ENCODE measurements at regions of chr2 and their contacts with region 1.

Region 1: GRCh38 chr2:105143467-105144151 is 97.9 kb upstream of the GPR45 start:
- DNase-seq: peak; percentile 55
- ATAC-seq: peak; percentile 88
- H3K4me3 Mint-ChIP-seq: peak overlapping the region; percentile 88
- H3K27ac Mint-ChIP-seq: peak overlapping the region; percentile 71
- H3K4me1 Mint-ChIP-seq: peaks cover 26% of the 10 kb centered on the region
- H3K27me3 Mint-ChIP-seq: no peaks in the 10 kb centered on the region
- CTCF ChIP-seq: no peak

Region 2: GRCh38 chr2:105114551-105114950 is 29.1 kb before region 1 on chr2:
- CTCF ChIA-PET with region 1: interaction called, 12 read pairs
- POLR2A ChIA-PET with region 1: no interaction called
- intact Hi-C with region 1: no loop called
- DNase-seq: no peak
- ATAC-seq: no peak
- H3K4me3 Mint-ChIP-seq: no peak overlapping the region
- H3K27ac Mint-ChIP-seq: no peak overlapping the region
- H3K4me1 Mint-ChIP-seq: no peaks in the 10 kb centered on the region
- H3K27me3 Mint-ChIP-seq: no peaks in the 10 kb centered on the region
- CTCF ChIP-seq: peak; percentile 64

Region 3: DNA sequence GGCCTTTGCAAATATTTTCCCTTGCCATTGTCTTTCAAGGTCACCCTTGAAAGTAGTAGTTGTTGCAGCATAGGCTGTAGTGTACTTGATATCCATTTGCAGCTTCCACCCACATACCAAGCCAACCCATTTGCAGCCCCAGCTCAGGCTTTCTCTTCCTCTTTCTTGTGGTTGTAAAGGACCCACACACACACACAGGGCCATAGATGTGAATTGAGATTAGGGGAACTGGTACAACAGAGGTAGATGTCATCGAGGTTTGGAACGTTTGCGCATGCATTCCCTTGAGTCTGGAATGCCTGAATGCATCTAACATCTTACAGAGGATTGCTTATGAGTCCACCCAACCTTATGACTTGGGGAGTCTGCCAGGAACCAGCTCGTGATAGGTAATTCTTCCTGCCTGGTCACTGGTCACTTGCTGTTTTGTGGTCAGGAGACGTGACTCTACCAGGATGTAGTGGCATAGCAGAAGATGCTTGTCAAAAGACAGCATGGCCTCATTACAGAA is 13.8 kb before region 1 on chr2:
- CTCF ChIA-PET with region 1: no interaction called
- POLR2A ChIA-PET with region 1: interaction called, 3 read pairs
- intact Hi-C with region 1: loop called (anchors 1 kb)
- DNase-seq: no peak
- ATAC-seq: peak; percentile 94
- H3K4me3 Mint-ChIP-seq: no peak overlapping the region
- H3K27ac Mint-ChIP-seq: peak overlapping the region; percentile 16
- H3K4me1 Mint-ChIP-seq: peaks cover 24% of the 10 kb centered on the region
- H3K27me3 Mint-ChIP-seq: peaks cover 4% of the 10 kb centered on the region
- CTCF ChIP-seq: no peak

Region 4: GRCh38 chr2:105179469-105180372 is 36.1 kb after region 1 on chr2:
- CTCF ChIA-PET with region 1: no interaction called
- POLR2A ChIA-PET with region 1: no interaction called
- intact Hi-C with region 1: loop called (anchors 5 kb)
- DNase-seq: no peak
- ATAC-seq: no peak
- H3K4me3 Mint-ChIP-seq: no peak overlapping the region
- H3K27ac Mint-ChIP-seq: no peak overlapping the region
- H3K4me1 Mint-ChIP-seq: peaks cover 69% of the 10 kb centered on the region
- H3K27me3 Mint-ChIP-seq: no peaks in the 10 kb centered on the region
- CTCF ChIP-seq: no peak

Region 5: GRCh38 chr2:105454801-105455485 is 311.3 kb after region 1 on chr2:
- CTCF ChIA-PET with region 1: no interaction called
- POLR2A ChIA-PET with region 1: no interaction called
- intact Hi-C with region 1: no loop called
- DNase-seq: no peak
- ATAC-seq: no peak
- H3K4me3 Mint-ChIP-seq: no peak overlapping the region
- H3K27ac Mint-ChIP-seq: no peak overlapping the region
- H3K4me1 Mint-ChIP-seq: no peaks in the 10 kb centered on the region
- H3K27me3 Mint-ChIP-seq: peaks cover 11% of the 10 kb centered on the region
- CTCF ChIP-seq: no peak